Activated CD4-positive, alpha-beta T cell treated with anti-CD3 and anti-CD28 coated beads, Interleukin-2, amount 10 ng/mL, durations not matched to agents 24 days and 14 days (primary cell): ENCODE measurements at regions of chr17 and their contacts with region 1.

Region 1: DNA sequence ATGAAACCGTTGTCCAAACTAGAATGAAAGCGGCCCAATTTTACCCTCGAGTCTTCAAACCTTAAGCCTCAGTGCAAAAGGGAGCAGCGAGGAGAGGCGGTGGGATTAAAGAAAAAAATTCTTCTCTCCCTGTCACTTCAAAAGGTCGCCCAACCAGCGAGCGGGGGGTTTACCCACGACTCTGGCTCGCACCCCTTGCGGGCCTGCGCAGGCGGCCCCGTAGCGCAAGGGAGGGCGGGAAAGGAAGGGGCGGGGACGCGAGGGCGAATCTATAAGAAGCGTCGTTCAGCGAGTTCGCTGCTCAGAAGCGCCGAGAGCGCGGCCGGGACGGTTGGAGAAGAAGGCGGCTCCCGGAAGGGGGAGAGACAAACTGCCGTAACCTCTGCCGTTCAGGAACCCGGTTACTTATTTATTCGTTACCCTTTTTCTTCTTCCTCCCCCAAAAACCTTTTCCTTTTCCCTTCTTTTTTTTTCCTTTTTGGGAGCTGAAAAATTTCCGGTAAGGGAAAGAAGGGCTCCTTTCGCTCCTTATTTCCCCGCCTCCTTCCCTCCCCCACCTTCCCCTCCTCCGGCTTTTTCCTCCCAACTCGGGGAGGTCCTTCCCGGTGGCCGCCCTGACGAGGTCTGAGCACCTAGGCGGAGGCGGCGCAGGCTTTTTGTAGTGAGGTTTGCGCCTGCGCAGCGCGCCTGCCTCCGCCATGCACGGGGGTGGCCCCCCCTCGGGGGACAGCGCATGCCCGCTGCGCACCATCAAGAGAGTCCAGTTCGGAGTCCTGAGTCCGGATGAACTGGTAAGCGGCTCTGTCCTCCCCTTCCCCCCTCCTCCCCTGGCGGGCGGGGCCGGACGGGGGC is at the start of gene POLR2A:
- DNase-seq: peak; percentile 99
- H3K4me3 Mint-ChIP-seq: peak within 1 kb of the TSS; percentile 88
- H3K27ac Mint-ChIP-seq: peak within 1 kb of the TSS; percentile 100
- H3K4me1 Mint-ChIP-seq: peaks cover 55% of the 10 kb centered on the region
- H3K27me3 Mint-ChIP-seq: no peaks in the 10 kb centered on the region
- total RNA-seq, gene POLR2A: 226 and 230 TPM in 2 replicates

Region 2: GRCh38 chr17:7306911-7307686 is 177.2 kb before region 1 on chr17 and contains the start of gene EIF5A:
- intact Hi-C with region 1: loop called (anchors 2 kb)
- DNase-seq: peak; percentile 100
- H3K4me3 Mint-ChIP-seq: peak within 1 kb of the TSS; percentile 90
- H3K27ac Mint-ChIP-seq: peak within 1 kb of the TSS; percentile 99
- H3K4me1 Mint-ChIP-seq: peaks cover 40% of the 10 kb centered on the region
- H3K27me3 Mint-ChIP-seq: peaks cover 5% of the 10 kb centered on the region
- total RNA-seq, gene EIF5A: 1,303 and 1,327 TPM in 2 replicates

Region 3: GRCh38 chr17:7394452-7395191 is 89.7 kb before region 1 on chr17 and contains the start of gene PLSCR3:
- intact Hi-C with region 1: loop called (anchors 2 kb)
- DNase-seq: peak; percentile 97
- H3K4me3 Mint-ChIP-seq: peak within 1 kb of the TSS; percentile 96
- H3K27ac Mint-ChIP-seq: peak within 1 kb of the TSS; percentile 95
- H3K4me1 Mint-ChIP-seq: peaks cover 28% of the 10 kb centered on the region
- H3K27me3 Mint-ChIP-seq: no peaks in the 10 kb centered on the region
- total RNA-seq, gene PLSCR3: 75.5 and 79.8 TPM in 2 replicates

Region 4: GRCh38 chr17:7435221-7435675 is 49.0 kb before region 1 on chr17 and contains the start of gene TMEM102:
- intact Hi-C with region 1: loop called (anchors 1 kb)
- DNase-seq: peak; percentile 99
- H3K4me3 Mint-ChIP-seq: peak within 1 kb of the TSS; percentile 93
- H3K27ac Mint-ChIP-seq: peak within 1 kb of the TSS; percentile 98
- H3K4me1 Mint-ChIP-seq: peaks cover 31% of the 10 kb centered on the region
- H3K27me3 Mint-ChIP-seq: peaks cover 7% of the 10 kb centered on the region
- total RNA-seq, gene TMEM102: 12.8 and 12.9 TPM in 2 replicates

Region 5: DNA sequence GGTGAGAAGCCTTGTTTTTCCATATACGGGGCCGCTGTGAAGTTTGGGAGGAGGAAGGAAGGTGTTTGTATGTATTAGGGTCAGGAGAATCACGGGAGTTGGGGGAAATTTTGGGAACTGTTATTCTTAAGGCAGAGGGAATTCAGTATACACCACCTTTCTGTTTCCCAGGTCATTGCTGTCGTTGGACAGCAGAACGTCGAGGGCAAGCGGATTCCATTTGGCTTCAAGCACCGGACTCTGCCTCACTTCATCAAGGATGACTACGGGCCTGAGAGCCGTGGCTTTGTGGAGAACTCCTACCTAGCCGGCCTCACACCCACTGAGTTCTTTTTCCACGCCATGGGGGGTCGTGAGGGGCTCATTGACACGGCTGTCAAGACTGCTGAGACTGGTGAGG is 17.4 kb after region 1 on chr17:
- intact Hi-C with region 1: loop called (anchors 2 kb)
- DNase-seq: no peak
- H3K4me3 Mint-ChIP-seq: no peak overlapping the region
- H3K27ac Mint-ChIP-seq: no peak overlapping the region
- H3K4me1 Mint-ChIP-seq: no peaks in the 10 kb centered on the region
- H3K27me3 Mint-ChIP-seq: no peaks in the 10 kb centered on the region

Region 6: DNA sequence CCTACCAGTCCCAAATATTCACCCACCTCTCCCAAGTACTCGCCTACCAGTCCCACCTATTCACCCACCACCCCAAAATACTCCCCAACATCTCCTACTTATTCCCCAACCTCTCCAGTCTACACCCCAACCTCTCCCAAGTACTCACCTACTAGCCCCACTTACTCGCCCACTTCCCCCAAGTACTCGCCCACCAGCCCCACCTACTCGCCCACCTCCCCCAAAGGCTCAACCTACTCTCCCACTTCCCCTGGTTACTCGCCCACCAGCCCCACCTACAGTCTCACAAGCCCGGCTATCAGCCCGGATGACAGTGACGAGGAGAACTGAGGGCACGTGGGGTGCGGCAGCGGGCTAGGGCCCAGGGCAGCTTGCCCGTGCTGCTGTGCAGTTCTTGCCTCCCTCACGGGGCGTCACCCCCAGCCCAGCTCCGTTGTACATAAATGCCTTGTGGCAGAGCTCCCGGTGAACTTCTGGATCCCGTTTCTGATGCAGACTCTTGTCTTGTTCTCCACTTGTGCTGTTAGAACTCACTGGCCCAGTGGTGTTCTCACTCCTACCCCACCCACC is 29.6 kb after region 1 on chr17:
- intact Hi-C with region 1: no loop called
- DNase-seq: no peak
- H3K4me3 Mint-ChIP-seq: no peak overlapping the region
- H3K27ac Mint-ChIP-seq: no peak overlapping the region
- H3K4me1 Mint-ChIP-seq: peaks cover 15% of the 10 kb centered on the region
- H3K27me3 Mint-ChIP-seq: no peaks in the 10 kb centered on the region

Region 7: DNA sequence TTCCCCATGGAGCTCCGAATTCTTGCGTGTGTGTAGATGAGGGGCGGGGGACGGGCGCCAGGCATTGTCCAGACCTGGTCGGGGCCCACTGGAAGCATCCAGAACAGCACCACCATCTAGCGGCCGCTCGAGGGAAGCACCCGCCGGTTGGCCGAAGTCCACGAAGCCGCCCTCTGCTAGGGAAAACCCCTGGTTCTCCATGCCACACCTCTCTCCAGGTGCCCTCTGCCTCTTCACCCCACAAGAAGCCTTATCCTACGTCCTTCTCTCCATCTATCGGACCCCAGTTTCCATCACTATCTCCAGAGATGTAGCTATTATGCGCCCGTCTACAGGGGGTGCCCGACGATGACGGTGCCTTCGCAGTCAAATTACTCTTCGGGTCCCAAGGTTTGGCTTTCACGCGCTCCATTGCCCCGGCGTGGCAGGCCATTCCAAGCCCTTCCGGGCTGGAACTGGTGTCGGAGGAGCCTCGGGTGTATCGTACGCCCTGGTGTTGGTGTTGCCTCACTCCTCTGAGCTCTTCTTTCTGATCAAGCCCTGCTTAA is 76.8 kb after region 1 on chr17:
- intact Hi-C with region 1: loop called (anchors 2 kb)
- DNase-seq: peak; percentile 96
- H3K4me3 Mint-ChIP-seq: peak overlapping the region; percentile 97
- H3K27ac Mint-ChIP-seq: peak overlapping the region; percentile 99
- H3K4me1 Mint-ChIP-seq: peaks cover 39% of the 10 kb centered on the region
- H3K27me3 Mint-ChIP-seq: peaks cover 2% of the 10 kb centered on the region